Uterus (tissue), 4 donors: ENCODE measurements at regions of chr1 and their contacts with region 1.

Region 1: GRCh38 chr1:196651637-196652215 is at the start of gene CFH:
- DNase-seq: no peak
- H3K4me3 ChIP-seq: peak within 1 kb of the TSS in 1 of 2 donors; percentile 22
- H3K27ac ChIP-seq: no peak within 1 kb of the TSS
- H3K4me1 ChIP-seq: no peaks in the 10 kb centered on the region
- H3K27me3 ChIP-seq: no peaks in the 10 kb centered on the region
- CTCF ChIP-seq: no peak
- POLR2A ChIP-seq: no peak
- total RNA-seq, gene CFH: 7.2 to 83.8 (median 24.4) TPM

Region 2: GRCh38 chr1:196152086-196152485 is 499.6 kb before region 1 on chr1:
- intact Hi-C with region 1: loop called (anchors 10 kb)
- DNase-seq: no peak
- H3K4me3 ChIP-seq: no peak overlapping the region
- H3K27ac ChIP-seq: no peak overlapping the region
- H3K4me1 ChIP-seq: no peaks in the 10 kb centered on the region
- H3K27me3 ChIP-seq: no peaks in the 10 kb centered on the region
- CTCF ChIP-seq: no peak
- POLR2A ChIP-seq: no peak

Region 3: DNA sequence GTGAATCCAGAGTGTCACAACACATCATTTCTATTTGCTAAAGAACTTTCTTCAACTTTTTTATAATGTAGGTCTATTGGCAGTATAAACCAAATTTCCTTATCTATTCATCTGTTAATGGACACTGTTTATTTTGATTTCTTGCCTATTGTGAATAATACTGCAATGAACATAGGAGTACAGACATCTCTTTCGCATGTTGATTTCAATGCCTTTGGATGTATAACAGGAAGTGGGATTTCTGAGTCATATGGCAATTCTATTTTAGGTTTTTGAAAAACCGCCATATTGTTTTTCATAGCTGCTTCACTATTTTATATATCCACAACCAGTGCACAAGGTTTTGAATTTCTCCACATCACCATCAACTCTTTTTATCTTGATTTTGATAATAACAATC is 242.1 kb before region 1 on chr1:
- intact Hi-C with region 1: no loop called
- DNase-seq: no peak
- H3K4me3 ChIP-seq: no peak overlapping the region
- H3K27ac ChIP-seq: no peak overlapping the region
- H3K4me1 ChIP-seq: peaks cover 0 to 4% of the 10 kb centered on the region in 2 donors
- H3K27me3 ChIP-seq: no peaks in the 10 kb centered on the region
- CTCF ChIP-seq: no peak
- POLR2A ChIP-seq: no peak